Colonic mucosa (tissue), 4 donors: ENCODE measurements at regions of chr2 and their contacts with region 1.

Region 1: GRCh38 chr2:33924586-33925169 is 325.6 kb upstream of the FAM98A start:
- DNase-seq: no peak
- H3K4me3 ChIP-seq: no peak overlapping the region
- H3K27ac ChIP-seq: no peak overlapping the region
- H3K4me1 ChIP-seq: no peaks in the 10 kb centered on the region
- H3K27me3 ChIP-seq: no peaks in the 10 kb centered on the region
- CTCF ChIP-seq: no peak

Region 2: DNA sequence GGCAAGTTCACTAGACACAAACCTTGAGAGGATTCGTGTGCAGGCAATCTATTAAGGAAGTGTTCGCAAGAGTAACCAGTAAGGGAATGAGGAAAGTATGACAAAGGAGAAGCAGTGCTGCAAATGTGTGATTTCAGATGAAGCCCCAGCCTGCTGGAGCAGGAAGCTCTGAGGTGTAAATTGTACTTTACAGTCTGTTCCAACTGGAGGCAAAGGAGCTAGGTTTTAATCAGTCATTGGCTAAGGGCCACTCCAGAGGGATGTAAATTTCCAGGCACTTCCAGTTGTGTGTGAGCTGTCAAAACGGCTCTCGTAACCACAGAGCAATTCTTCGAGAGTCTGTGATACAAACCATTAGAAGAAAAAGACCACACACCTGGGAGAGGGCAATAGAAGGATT is 33.9 kb after region 1 on chr2:
- intact Hi-C with region 1: loop called (anchors 2 kb)
- DNase-seq: no peak
- H3K4me3 ChIP-seq: no peak overlapping the region
- H3K27ac ChIP-seq: no peak overlapping the region
- H3K4me1 ChIP-seq: no peaks in the 10 kb centered on the region
- H3K27me3 ChIP-seq: no peaks in the 10 kb centered on the region
- CTCF ChIP-seq: no peak

Region 3: GRCh38 chr2:34096562-34097171 is 172.0 kb after region 1 on chr2:
- intact Hi-C with region 1: no loop called
- DNase-seq: peak; percentile 59
- H3K4me3 ChIP-seq: no peak overlapping the region
- H3K27ac ChIP-seq: no peak overlapping the region
- H3K4me1 ChIP-seq: no peaks in the 10 kb centered on the region
- H3K27me3 ChIP-seq: no peaks in the 10 kb centered on the region
- CTCF ChIP-seq: peak; percentile 65